Transverse colon (tissue), 4 donors: ENCODE measurements at regions of chr17 and their contacts with region 1.

Region 1: GRCh38 chr17:58082870-58083490 is at the start of gene DYNLL2:
- DNase-seq: peak; percentile 94
- H3K4me3 ChIP-seq: peak within 1 kb of the TSS; percentile 81 to 100 (median 96)
- H3K27ac ChIP-seq: peak within 1 kb of the TSS; percentile 94 to 100 (median 98)
- H3K4me1 ChIP-seq: peaks cover 23 to 40% (median 26%) of the 10 kb centered on the region in 4 donors
- H3K27me3 ChIP-seq: no peaks in the 10 kb centered on the region
- CTCF ChIP-seq: no peak
- EP300 ChIP-seq: no peak
- POLR2A ChIP-seq: no peak
- total RNA-seq, gene DYNLL2: 12.3 to 26.2 (median 22.7) TPM

Region 2: GRCh38 chr17:57662644-57663308 is 420.2 kb before region 1 on chr17:
- in situ Hi-C with region 1: no loop called
- intact Hi-C with region 1: no loop called
- DNase-seq: peak; percentile 87
- H3K4me3 ChIP-seq: peak overlapping the region in 2 of 4 donors; percentile 24 to 28
- H3K27ac ChIP-seq: peak overlapping the region; percentile 71 to 79 (median 76)
- H3K4me1 ChIP-seq: peaks cover 4 to 7% (median 5%) of the 10 kb centered on the region in 4 donors
- H3K27me3 ChIP-seq: no peaks in the 10 kb centered on the region
- CTCF ChIP-seq: no peak
- EP300 ChIP-seq: no peak
- POLR2A ChIP-seq: no peak

Region 3: DNA sequence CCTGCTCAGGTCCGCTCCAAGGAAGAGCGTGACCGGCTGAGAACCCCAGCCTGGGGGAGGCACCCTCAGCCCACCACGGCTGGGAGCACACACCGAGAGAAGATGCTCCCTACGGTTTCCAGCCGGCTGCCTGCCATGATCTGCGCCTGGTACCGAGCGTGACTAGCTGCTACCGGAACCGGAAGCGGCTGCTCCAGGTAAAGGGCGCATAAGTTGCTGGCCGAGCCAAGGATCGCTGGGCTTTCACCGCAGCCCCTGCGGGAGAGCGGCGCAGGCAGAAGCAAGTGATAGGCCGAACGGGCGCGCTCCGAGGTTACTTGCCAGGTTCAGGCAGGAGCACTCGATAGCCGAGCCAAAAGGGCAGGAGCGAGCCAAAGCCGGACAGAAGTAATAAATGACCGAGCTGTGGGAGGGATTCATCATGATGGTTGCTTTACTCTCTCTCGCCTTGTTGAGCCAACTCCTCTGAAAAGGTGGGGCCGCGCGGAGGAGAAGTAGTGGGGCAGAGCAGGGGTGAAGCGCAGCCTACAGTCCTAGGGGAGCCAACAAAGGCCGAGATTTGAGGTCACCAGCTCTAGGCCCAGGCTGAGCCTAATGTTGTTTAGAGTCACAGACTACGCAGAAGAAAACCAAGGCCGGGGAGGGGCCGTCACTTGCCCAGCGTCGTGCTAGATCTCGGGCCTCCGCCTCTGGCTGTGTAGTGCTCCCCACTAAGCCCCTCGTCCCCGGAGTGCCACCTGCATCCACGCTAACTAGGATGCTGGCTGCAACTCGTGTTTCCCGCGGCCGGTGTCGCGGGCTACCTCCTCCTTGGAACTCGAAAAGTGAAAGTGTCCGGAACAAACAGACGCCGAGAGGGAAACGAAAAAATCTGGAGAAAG is 232.9 kb before region 1 on chr17 and contains the start of gene MRPS23:
- in situ Hi-C with region 1: loop called in 1 of 4 experiments (anchors 25 kb)
- intact Hi-C with region 1: loop called (anchors 10 kb)
- DNase-seq: peak; percentile 98
- H3K4me3 ChIP-seq: peak within 1 kb of the TSS; percentile 61 to 92 (median 72)
- H3K27ac ChIP-seq: peak within 1 kb of the TSS; percentile 90 to 95 (median 92)
- H3K4me1 ChIP-seq: peaks cover 15 to 36% (median 24%) of the 10 kb centered on the region in 4 donors
- H3K27me3 ChIP-seq: no peaks in the 10 kb centered on the region
- CTCF ChIP-seq: peak in 2 of 5 experiments; percentile 7 to 17
- EP300 ChIP-seq: no peak
- POLR2A ChIP-seq: peak; percentile 85
- total RNA-seq, gene MRPS23: 0.37 to 11.1 (median 6.5) TPM

Region 4: GRCh38 chr17:57995076-57995956 is 87.7 kb before region 1 on chr17:
- in situ Hi-C with region 1: loop called in 1 of 4 experiments (anchors 25 kb)
- intact Hi-C with region 1: no loop called
- DNase-seq: peak; percentile 66
- H3K4me3 ChIP-seq: no peak overlapping the region
- H3K27ac ChIP-seq: peak overlapping the region; percentile 49 to 73 (median 52)
- H3K4me1 ChIP-seq: peaks cover 7 to 34% (median 16%) of the 10 kb centered on the region in 4 donors
- H3K27me3 ChIP-seq: no peaks in the 10 kb centered on the region
- CTCF ChIP-seq: peak; percentile 60 to 90 (median 71)
- EP300 ChIP-seq: no peak
- POLR2A ChIP-seq: peak; percentile 25

Region 5: DNA sequence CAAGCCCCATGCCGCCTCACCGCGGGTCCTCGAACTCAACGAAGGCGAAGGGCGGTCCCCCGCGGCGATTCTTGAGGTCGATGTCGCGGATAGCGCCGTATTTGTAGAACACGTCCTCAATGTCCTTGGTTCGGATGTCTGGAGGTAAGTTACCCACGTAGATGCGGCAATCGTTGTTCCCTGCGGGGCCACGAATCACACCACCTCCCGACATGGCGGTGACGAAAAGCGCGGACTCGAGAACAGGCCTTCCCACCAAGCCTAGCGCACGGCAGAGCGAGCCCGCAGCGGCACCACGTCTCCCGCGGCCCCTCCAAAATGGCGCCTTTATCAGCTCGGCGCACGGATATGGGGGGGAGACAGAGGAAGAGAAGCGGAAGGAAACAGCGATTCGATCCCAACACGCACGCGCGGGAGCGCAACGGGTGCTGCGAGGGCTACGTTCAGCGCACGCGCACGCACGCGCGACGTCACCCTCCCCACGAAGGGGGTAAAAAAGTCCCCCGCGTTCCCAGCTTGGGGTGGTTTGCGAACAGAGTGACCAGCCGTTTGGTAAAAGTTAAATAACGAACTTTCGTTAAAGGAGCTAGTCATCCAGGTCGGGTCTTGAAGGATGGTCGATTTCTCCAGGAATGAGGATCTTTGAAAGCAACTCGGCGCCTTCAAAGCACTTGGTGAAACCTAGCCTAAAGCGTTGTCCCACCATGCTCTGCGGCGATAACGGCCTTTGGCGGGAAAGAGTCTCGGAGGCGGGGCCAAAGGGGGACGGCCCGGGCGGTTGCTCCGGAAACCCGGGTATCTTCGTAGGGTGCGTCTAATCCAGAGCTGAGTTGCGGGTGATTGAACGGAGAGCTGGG is 75.8 kb before region 1 on chr17 and contains the start of gene SRSF1:
- in situ Hi-C with region 1: loop called in 1 of 4 experiments (anchors 10 kb)
- intact Hi-C with region 1: loop called (anchors 5 kb)
- DNase-seq: peak; percentile 98
- H3K4me3 ChIP-seq: peak within 1 kb of the TSS; percentile 63 to 82 (median 74)
- H3K27ac ChIP-seq: peak within 1 kb of the TSS; percentile 96 to 98 (median 96)
- H3K4me1 ChIP-seq: peaks cover 18 to 48% (median 38%) of the 10 kb centered on the region in 4 donors
- H3K27me3 ChIP-seq: no peaks in the 10 kb centered on the region
- CTCF ChIP-seq: no peak
- EP300 ChIP-seq: peak; percentile 20
- POLR2A ChIP-seq: peak; percentile 95
- total RNA-seq, gene SRSF1: 122 to 174 (median 143) TPM

Region 6: DNA sequence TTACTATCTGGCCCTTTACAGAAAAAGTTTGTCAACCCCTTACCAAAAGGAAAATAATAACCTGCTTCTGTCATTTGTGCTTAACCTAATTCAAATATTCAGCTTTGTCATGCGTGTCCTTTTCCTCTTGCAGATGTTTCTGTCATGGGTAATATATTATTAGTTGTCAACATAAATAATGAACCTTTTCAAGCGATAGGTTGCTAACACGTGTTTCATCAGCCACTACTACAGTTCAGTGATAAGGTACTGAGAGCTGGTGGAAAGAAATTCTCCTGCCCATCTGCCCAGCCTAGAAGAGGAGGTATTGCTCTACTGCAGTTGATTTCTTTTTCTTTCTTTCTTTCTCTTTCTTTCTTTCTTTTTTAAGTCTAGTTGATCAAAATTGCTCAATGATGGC is 63.9 kb before region 1 on chr17:
- in situ Hi-C with region 1: loop called in 1 of 4 experiments (anchors 10 kb)
- intact Hi-C with region 1: no loop called
- DNase-seq: no peak
- H3K4me3 ChIP-seq: no peak overlapping the region
- H3K27ac ChIP-seq: no peak overlapping the region
- H3K4me1 ChIP-seq: no peaks in the 10 kb centered on the region
- H3K27me3 ChIP-seq: no peaks in the 10 kb centered on the region
- CTCF ChIP-seq: no peak
- EP300 ChIP-seq: no peak
- POLR2A ChIP-seq: no peak